ENCODE measurements at regions of chr3 and their contacts with region 1.

Region 1: DNA sequence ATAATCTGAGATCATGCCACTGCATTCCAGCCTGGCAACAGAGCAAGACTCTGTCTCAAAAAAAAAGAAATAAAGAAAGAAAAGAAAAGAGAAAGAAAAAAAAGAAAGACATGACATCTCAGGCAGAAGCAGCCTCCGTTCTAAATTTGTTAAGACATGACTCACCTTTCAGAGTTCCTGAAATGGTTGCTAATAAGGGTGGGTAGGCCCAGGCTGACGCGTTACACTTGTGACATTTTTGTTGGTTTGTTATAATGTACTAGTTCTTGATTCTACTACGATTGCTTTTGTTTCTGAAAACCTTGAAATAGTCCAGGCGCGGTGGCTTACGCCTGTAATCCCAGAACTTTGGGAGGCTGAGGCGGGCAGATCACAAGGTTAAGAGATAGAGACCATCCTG is 21.0 kb downstream of the SLC25A20 start:
- DNase-seq: no peak
- H3K4me3 ChIP-seq: no peak overlapping the region
- H3K27ac ChIP-seq: no peak overlapping the region
- H3K4me1 ChIP-seq: no peaks in the 10 kb centered on the region
- H3K27me3 ChIP-seq: no peaks in the 10 kb centered on the region
- CTCF ChIP-seq: no peak

Region 2: GRCh38 chr3:48367201-48367600 is 510.5 kb before region 1 on chr3:
- intact Hi-C with region 1: loop called (anchors 10 kb)
- DNase-seq: no peak
- H3K4me3 ChIP-seq: no peak overlapping the region
- H3K27ac ChIP-seq: no peak overlapping the region
- H3K4me1 ChIP-seq: no peaks in the 10 kb centered on the region
- H3K27me3 ChIP-seq: no peaks in the 10 kb centered on the region
- CTCF ChIP-seq: no peak

Region 3: GRCh38 chr3:49093853-49094767 is 216.4 kb after region 1 on chr3 and contains the start of gene QRICH1:
- intact Hi-C with region 1: no loop called
- DNase-seq: peak; percentile 97 to 99
- H3K4me3 ChIP-seq: peak within 1 kb of the TSS; percentile 77 to 98
- H3K27ac ChIP-seq: peak within 1 kb of the TSS; percentile 91 to 96
- H3K4me1 ChIP-seq: peaks cover 5 to 46% (median 40%) of the 10 kb centered on the region in 4 donors
- H3K27me3 ChIP-seq: no peaks in the 10 kb centered on the region
- CTCF ChIP-seq: peak; percentile 47 to 58